ENCODE measurements at regions of chr19 and their contacts with region 1.

Region 1: DNA sequence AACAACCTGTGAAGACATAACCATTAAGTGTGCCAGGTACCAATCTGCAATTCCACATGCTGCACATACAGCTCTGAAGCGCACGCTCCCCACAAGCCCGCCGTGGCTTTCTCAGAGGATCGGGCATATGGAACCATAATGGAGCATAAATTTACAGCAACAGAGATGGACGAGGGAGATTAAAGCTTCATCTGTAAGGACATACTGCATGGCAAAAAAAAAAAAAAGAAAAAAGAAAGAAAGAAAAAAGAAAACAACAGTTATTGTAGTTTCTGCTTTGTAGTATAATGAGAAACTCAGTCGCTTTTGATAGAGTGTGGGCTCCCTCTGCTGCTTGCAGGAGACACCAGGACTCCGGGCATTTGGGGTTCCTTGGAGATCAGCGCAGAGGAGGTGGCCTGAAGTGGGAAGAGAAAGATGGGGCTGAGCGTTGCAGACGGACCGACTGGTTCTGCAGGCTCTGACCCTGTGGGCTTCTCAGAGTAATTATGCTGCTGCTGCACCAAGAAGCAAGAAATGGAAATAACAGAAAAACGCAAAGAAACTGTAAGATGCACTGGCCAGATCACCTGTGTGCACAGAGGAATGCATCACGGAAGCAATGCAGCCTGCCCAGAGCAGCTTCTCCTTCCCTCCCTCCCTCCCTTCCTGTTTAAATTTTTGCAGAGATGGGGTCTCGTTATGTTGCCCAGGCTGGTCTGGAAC is 10.8 kb upstream of the PDCD5 start:
- DNase-seq: peak; percentile 52
- ATAC-seq: peak; percentile 97
- H3K4me3 ChIP-seq: peak overlapping the region; percentile 25 to 26
- H3K27ac ChIP-seq: no peak overlapping the region; the same call in 1 of the 2 replicates
- H3K4me1 ChIP-seq: no peaks in the 10 kb centered on the region
- H3K27me3 ChIP-seq: no peaks in the 10 kb centered on the region
- CTCF ChIP-seq: peak; percentile 95

Region 2: GRCh38 chr19:30682999-30683536 is 1887.2 kb before region 1 on chr19:
- CTCF ChIA-PET with region 1: no interaction called
- POLR2A ChIA-PET with region 1: no interaction called
- in situ Hi-C with region 1: no loop called
- intact Hi-C with region 1: loop called (anchors 5 kb)
- DNase-seq: peak; percentile 42
- ATAC-seq: peak; percentile 80
- H3K4me3 ChIP-seq: no peak overlapping the region
- H3K27ac ChIP-seq: no peak overlapping the region
- H3K4me1 ChIP-seq: peaks cover 10% of the 10 kb centered on the region
- H3K27me3 ChIP-seq: peaks cover 13% of the 10 kb centered on the region
- CTCF ChIP-seq: peak; percentile 96

Region 3: DNA sequence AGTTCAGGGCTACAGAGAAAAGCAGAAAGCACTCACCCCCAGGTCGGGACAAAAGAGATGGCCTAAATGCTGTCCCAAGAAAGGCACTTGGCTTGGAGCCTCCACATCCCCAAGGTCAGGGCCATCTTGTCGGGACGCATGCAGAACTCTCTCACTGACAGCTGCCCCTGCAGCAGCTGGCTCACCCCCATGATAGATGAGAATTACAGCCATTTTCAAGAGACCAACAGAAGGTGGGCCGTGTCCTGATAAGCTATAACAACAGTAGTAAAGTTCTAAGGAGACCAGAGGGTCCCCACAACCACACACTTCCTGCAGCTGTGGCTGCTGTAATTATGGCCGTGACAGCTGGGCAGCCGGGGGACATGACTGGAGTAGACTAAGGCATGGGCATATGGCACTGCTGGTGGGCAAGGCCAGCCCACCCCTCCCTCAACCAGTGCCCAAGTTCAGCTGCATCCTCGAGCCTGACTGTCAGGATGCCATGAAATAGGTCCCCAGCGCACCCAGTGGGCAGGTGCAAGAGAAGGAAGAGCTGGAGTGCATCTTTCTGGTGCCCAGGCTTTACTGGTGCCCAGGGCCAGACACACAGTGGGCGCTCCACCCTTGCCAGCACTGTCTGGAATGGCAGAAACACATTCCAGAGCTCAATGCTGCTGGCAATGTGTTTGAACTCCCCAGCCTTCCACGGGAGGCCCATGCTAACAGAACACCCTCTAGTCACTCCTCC is 661.6 kb before region 1 on chr19:
- CTCF ChIA-PET with region 1: interaction called, 14 read pairs
- POLR2A ChIA-PET with region 1: no interaction called
- in situ Hi-C with region 1: no loop called
- intact Hi-C with region 1: no loop called
- DNase-seq: no peak
- ATAC-seq: no peak
- H3K4me3 ChIP-seq: no peak overlapping the region
- H3K27ac ChIP-seq: no peak overlapping the region
- H3K4me1 ChIP-seq: no peaks in the 10 kb centered on the region
- H3K27me3 ChIP-seq: no peaks in the 10 kb centered on the region
- CTCF ChIP-seq: no peak

Region 4: DNA sequence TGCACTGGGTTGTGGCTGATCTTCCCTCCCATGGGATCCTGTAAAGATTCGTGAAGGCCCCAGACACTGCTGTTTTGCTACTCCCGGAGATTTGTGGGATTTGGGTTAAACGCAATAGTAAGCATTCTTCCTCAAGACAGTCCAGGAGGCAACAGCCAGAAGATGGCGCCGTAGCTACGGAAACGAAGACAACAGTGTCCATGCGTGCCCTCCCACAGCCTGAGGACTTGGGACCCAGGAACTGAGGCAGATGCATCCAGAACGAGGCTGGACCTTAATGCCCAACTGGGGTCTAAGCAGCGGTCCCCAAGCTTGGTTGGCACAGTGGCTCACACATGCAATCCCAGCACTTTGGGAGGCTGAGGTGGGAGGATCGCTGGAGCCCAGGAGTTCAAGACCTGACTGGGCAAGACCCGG is 282.4 kb before region 1 on chr19:
- CTCF ChIA-PET with region 1: interaction called, 5 read pairs
- POLR2A ChIA-PET with region 1: no interaction called
- in situ Hi-C with region 1: no loop called
- intact Hi-C with region 1: loop called (anchors 10 kb)
- DNase-seq: peak; percentile 10
- ATAC-seq: peak; percentile 74
- H3K4me3 ChIP-seq: 0 out of 4 replicates have a peak overlapping the region, but pooled peaks of 1 of the 2 experiments have one; percentile 6
- H3K27ac ChIP-seq: no peak overlapping the region
- H3K4me1 ChIP-seq: no peaks in the 10 kb centered on the region
- H3K27me3 ChIP-seq: peaks cover 5% of the 10 kb centered on the region
- CTCF ChIP-seq: peak; percentile 84

Region 5: GRCh38 chr19:32324631-32325285 is 245.5 kb before region 1 on chr19:
- CTCF ChIA-PET with region 1: interaction called, 6 read pairs
- POLR2A ChIA-PET with region 1: interaction called, 4 read pairs
- in situ Hi-C with region 1: no loop called
- intact Hi-C with region 1: loop called (anchors 10 kb)
- DNase-seq: no peak
- ATAC-seq: peak; percentile 59; the same call in 1 of the 2 replicates
- H3K4me3 ChIP-seq: no peak overlapping the region
- H3K27ac ChIP-seq: peak overlapping the region; percentile 4; the same call in 1 of the 2 replicates
- H3K4me1 ChIP-seq: peaks cover 6% of the 10 kb centered on the region; the same call in 1 of the 2 replicates
- H3K27me3 ChIP-seq: no peaks in the 10 kb centered on the region
- CTCF ChIP-seq: peak; percentile 66; the same call in 1 of the 2 replicates

Region 6: DNA sequence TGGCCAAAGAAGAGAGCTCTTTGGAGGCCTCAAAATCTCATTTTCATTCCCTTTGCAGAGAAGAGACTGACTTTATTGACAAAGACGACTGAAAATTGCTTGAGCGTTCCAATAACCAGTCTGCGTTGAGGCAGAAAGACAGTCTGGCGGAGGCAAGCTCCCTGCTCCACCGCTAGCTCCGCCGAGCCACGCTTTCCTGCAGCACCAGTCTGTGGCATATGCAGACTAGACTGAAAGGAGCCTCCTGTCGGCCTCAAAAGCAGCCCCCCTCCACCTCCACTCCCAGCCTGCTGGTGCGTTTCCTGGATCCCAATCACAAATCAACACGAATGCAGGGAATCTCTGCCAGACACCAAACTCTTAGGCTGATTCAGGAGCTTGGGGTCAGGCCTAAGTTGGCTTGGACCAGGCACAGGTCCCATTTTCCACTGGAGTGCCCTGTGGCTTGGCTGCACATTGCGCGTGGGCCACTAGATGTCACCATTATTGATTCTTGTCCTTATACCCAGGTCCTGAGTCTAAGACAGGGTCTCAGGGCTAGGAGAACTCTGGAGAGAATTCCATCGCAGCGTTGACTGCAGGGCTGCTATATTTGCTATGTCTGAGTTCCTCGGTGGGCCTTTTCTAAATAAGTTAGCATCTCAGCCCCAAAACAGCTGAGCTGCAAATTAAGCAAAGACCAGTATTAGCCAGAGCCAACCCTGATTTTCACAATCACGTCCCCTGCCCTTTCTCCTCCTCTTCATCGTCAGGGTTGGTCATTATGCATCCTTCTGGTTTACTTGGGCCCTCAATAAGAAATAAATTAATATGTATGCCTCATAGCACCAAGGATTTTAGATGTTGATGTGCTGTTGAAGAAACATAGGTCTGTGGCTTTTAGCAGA is 230.0 kb before region 1 on chr19:
- CTCF ChIA-PET with region 1: interaction called, 10 read pairs
- POLR2A ChIA-PET with region 1: no interaction called
- in situ Hi-C with region 1: no loop called
- intact Hi-C with region 1: loop called (anchors 2 kb)
- DNase-seq: peak; percentile 53
- ATAC-seq: peak; percentile 91
- H3K4me3 ChIP-seq: no peak overlapping the region
- H3K27ac ChIP-seq: peak overlapping the region; percentile 32; the same call in 1 of the 2 replicates
- H3K4me1 ChIP-seq: peaks cover 12% of the 10 kb centered on the region
- H3K27me3 ChIP-seq: no peaks in the 10 kb centered on the region
- CTCF ChIP-seq: peak; percentile 92

Region 7: GRCh38 chr19:32464279-32464678 is 106.0 kb before region 1 on chr19:
- CTCF ChIA-PET with region 1: interaction called, 14 read pairs
- POLR2A ChIA-PET with region 1: no interaction called
- in situ Hi-C with region 1: no loop called
- intact Hi-C with region 1: loop called (anchors 1 kb)
- DNase-seq: peak; percentile 27
- ATAC-seq: peak; percentile 63; the same call in 1 of the 2 replicates
- H3K4me3 ChIP-seq: no peak overlapping the region
- H3K27ac ChIP-seq: no peak overlapping the region
- H3K4me1 ChIP-seq: no peaks in the 10 kb centered on the region
- H3K27me3 ChIP-seq: no peaks in the 10 kb centered on the region
- CTCF ChIP-seq: peak; percentile 69